Aorta (tissue), 5 donors: ENCODE measurements at regions of chr6 and their contacts with region 1.

Region 1: GRCh38 chr6:158220786-158221442 is 52.8 kb downstream of the GTF2H5 start:
- DNase-seq: peak; percentile 83 to 93
- ATAC-seq: peak; percentile 91
- H3K4me3 ChIP-seq: no peak overlapping the region
- H3K27ac ChIP-seq: no peak overlapping the region
- H3K4me1 ChIP-seq: no peaks in the 10 kb centered on the region
- H3K27me3 ChIP-seq: no peaks in the 10 kb centered on the region

Region 2: DNA sequence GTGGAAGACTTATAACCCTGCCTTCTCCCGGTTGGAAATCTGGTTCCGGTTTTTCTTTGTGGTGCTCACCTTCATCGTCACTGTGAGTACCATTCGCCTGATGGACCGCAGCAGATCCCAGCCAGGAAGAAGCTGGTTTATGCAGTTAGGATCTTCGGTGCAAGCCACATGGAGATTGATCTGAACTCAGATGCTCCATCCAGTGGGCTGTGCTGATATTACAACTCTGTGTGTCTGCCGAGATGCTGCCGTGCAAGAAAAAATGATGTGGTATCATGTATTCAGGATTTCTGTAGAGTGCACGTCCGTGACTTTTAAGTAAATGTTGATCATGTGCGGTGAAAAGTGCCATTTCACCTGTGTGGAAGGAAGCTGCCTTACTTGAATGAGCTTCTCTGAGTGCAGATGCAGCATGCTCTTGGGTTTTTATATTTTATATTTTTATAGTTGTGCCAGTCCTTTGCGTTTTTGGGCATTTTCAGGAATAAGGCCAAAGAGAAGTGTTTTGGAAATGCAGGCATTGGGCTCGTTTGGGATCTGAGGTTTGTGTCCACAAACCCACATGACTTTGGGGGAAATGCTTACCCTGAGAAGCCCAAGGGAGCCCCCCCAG is 384.5 kb after region 1 on chr6:
- intact Hi-C with region 1: loop called in 1 of 2 experiments (anchors 5 kb)
- DNase-seq: no peak
- ATAC-seq: peak; percentile 73
- H3K4me3 ChIP-seq: no peak overlapping the region
- H3K27ac ChIP-seq: no peak overlapping the region
- H3K4me1 ChIP-seq: no peaks in the 10 kb centered on the region
- H3K27me3 ChIP-seq: no peaks in the 10 kb centered on the region